ENCODE measurements at regions of chr16 and their contacts with region 1.

Region 1: GRCh38 chr16:4416200-4417032 is at the start of gene CORO7:
- DNase-seq: peak; percentile 95
- H3K4me3 Mint-ChIP-seq: peak within 1 kb of the TSS; percentile 89
- H3K27ac Mint-ChIP-seq: peak within 1 kb of the TSS; percentile 89
- H3K4me1 Mint-ChIP-seq: peaks cover 33% of the 10 kb centered on the region
- H3K27me3 Mint-ChIP-seq: no peaks in the 10 kb centered on the region
- total RNA-seq, gene CORO7: 39.7 to 43.3 TPM

Region 2: GRCh38 chr16:3880623-3881498 is 535.6 kb before region 1 on chr16 and contains the start of gene CREBBP:
- CTCF ChIA-PET with region 1: no interaction called
- intact Hi-C with region 1: loop called (anchors 5 kb)
- DNase-seq: peak; percentile 85
- H3K4me3 Mint-ChIP-seq: peak within 1 kb of the TSS; percentile 88
- H3K27ac Mint-ChIP-seq: peak within 1 kb of the TSS; percentile 89
- H3K4me1 Mint-ChIP-seq: peaks cover 33% of the 10 kb centered on the region
- H3K27me3 Mint-ChIP-seq: no peaks in the 10 kb centered on the region
- total RNA-seq, gene CREBBP: 29.9 to 33.0 TPM

Region 3: GRCh38 chr16:4307215-4308037 is 109.0 kb before region 1 on chr16:
- CTCF ChIA-PET with region 1: no interaction called
- intact Hi-C with region 1: loop called (anchors 1 kb)
- DNase-seq: peak; percentile 95
- H3K4me3 Mint-ChIP-seq: peak overlapping the region; percentile 84
- H3K27ac Mint-ChIP-seq: peak overlapping the region; percentile 85
- H3K4me1 Mint-ChIP-seq: peaks cover 24% of the 10 kb centered on the region
- H3K27me3 Mint-ChIP-seq: no peaks in the 10 kb centered on the region

Region 4: GRCh38 chr16:4402439-4403132 is 13.8 kb before region 1 on chr16:
- CTCF ChIA-PET with region 1: interaction called, 32 read pairs
- intact Hi-C with region 1: no loop called
- DNase-seq: peak; percentile 78
- H3K4me3 Mint-ChIP-seq: no peak overlapping the region
- H3K27ac Mint-ChIP-seq: no peak overlapping the region
- H3K4me1 Mint-ChIP-seq: peaks cover 2% of the 10 kb centered on the region
- H3K27me3 Mint-ChIP-seq: no peaks in the 10 kb centered on the region

Region 5: GRCh38 chr16:4538350-4539235 is 122.2 kb after region 1 on chr16 and contains the start of gene CDIP1:
- CTCF ChIA-PET with region 1: no interaction called
- intact Hi-C with region 1: loop called (anchors 5 kb)
- DNase-seq: peak; percentile 99
- H3K4me3 Mint-ChIP-seq: peak within 1 kb of the TSS; percentile 77
- H3K27ac Mint-ChIP-seq: peak within 1 kb of the TSS; percentile 54
- H3K4me1 Mint-ChIP-seq: peaks cover 41% of the 10 kb centered on the region
- H3K27me3 Mint-ChIP-seq: no peaks in the 10 kb centered on the region
- total RNA-seq, gene CDIP1: 31.9 to 35.7 TPM